Activated T-helper 1 cell treated with anti-CD3 and anti-CD28 coated beads, Interleukin-12 subunit alpha, Interleukin-12 subunit beta, Interleukin-2, Interleukin-4 antibody, amounts not matched to agents 30 ng/mL and 10 ng/mL and 1 ng/mL, durations not matched to agents 14 hours and 24 hours and 36 hours (primary cell): ENCODE measurements at regions of chr19 and their contacts with region 1.

Region 1: GRCh38 chr19:37466798-37467607 is at the start of gene ZNF569:
- DNase-seq: peak; percentile 85
- H3K4me3 Mint-ChIP-seq: peak within 1 kb of the TSS; percentile 92
- H3K27ac Mint-ChIP-seq: peak within 1 kb of the TSS; percentile 93
- H3K4me1 Mint-ChIP-seq: peaks cover 27% of the 10 kb centered on the region
- H3K27me3 Mint-ChIP-seq: no peaks in the 10 kb centered on the region
- total RNA-seq, gene ZNF569: 2.7 and 3.7 TPM in 2 replicates

Region 2: GRCh38 chr19:36573020-36573885 is 893.8 kb before region 1 on chr19 and contains the start of gene ZNF529:
- intact Hi-C with region 1: loop called (anchors 1 kb)
- DNase-seq: peak; percentile 85
- H3K4me3 Mint-ChIP-seq: peak within 1 kb of the TSS; percentile 89
- H3K27ac Mint-ChIP-seq: peak within 1 kb of the TSS; percentile 98
- H3K4me1 Mint-ChIP-seq: peaks cover 31% of the 10 kb centered on the region
- H3K27me3 Mint-ChIP-seq: no peaks in the 10 kb centered on the region
- total RNA-seq, gene ZNF529: 20.3 and 20.7 TPM in 2 replicates

Region 3: GRCh38 chr19:36973021-36973843 is 493.8 kb before region 1 on chr19:
- intact Hi-C with region 1: loop called (anchors 5 kb)
- DNase-seq: peak; percentile 67
- H3K4me3 Mint-ChIP-seq: peak overlapping the region; percentile 98
- H3K27ac Mint-ChIP-seq: peak overlapping the region; percentile 87
- H3K4me1 Mint-ChIP-seq: peaks cover 12% of the 10 kb centered on the region
- H3K27me3 Mint-ChIP-seq: no peaks in the 10 kb centered on the region

Region 4: DNA sequence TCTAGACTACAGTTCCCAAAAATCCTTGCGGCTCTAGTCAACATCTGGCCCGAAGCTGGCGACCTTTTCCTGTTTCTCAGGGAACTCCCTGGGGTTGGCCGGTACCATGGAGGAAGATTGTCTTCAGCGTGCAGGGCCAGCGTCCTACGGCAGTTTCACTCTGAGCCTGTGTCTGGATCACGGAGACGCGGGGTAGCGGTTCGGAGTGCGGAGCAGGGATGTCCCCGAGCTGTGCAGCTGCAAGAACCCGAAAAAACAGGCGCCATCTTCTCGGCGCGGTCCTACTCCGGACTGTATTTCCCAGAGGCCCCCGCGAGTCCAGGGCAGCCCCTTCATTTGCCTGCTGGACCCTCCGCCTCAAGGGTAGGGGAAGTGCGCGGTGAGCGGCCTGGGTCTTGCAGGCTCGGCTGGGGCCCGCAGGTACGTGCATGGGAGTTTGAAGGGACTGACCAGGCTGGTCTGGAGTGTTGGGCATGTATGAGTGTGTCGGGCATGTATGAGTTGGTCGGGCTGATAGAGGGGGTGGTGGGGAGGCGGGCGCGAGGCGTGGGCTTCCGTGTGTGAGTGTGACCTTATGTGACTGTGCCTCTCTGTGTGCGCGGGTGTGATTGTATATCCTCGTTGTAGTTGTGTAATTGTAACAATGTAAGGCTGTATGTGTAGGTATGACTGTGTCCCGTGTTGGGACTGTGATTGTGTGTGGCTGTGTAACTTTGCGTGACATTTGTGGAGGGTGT is 249.0 kb before region 1 on chr19 and contains the start of gene ZNF383:
- intact Hi-C with region 1: loop called (anchors 1 kb)
- DNase-seq: peak; percentile 78
- H3K4me3 Mint-ChIP-seq: peak within 1 kb of the TSS; percentile 96
- H3K27ac Mint-ChIP-seq: peak within 1 kb of the TSS; percentile 90
- H3K4me1 Mint-ChIP-seq: peaks cover 20% of the 10 kb centered on the region
- H3K27me3 Mint-ChIP-seq: no peaks in the 10 kb centered on the region
- total RNA-seq, gene ZNF383: 6.3 TPM in 2 replicates

Region 5: DNA sequence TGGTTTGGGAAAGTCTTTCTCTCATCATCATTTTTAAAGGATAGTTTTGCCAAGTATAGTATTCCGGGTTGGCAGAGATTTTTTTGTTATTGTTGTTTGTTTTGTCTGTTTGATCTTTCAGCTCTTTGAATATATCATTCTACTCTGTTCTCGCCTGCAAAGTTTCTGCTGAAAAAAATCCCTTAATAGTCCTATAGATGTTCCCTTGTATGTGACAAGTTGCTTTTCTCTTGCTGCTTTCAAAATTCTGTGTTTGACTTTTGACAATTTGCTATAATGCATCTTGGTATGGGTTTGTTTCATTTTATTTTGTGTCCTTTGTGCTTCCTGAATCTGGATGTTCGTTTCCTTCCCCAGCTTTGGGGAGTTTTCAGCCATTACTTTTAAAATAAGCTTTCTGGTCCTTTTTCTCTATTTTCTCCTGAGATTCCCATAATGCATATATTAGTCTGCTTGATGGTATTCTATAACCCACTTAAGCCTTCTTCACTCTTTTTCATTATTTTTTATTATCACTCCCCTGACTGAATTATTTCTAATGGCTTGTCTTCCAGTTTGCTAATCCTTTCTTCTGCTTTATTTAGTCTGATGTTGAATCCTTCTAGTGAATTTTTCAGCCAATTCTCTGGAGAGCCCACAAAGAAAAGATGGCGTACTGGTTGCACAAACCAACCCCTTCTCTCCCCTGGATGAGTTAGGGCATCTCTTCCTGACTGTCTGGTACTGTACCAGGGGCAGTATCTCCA is 14.3 kb before region 1 on chr19:
- intact Hi-C with region 1: no loop called
- DNase-seq: no peak
- H3K4me3 Mint-ChIP-seq: no peak overlapping the region
- H3K27ac Mint-ChIP-seq: no peak overlapping the region
- H3K4me1 Mint-ChIP-seq: no peaks in the 10 kb centered on the region
- H3K27me3 Mint-ChIP-seq: no peaks in the 10 kb centered on the region

Region 6: DNA sequence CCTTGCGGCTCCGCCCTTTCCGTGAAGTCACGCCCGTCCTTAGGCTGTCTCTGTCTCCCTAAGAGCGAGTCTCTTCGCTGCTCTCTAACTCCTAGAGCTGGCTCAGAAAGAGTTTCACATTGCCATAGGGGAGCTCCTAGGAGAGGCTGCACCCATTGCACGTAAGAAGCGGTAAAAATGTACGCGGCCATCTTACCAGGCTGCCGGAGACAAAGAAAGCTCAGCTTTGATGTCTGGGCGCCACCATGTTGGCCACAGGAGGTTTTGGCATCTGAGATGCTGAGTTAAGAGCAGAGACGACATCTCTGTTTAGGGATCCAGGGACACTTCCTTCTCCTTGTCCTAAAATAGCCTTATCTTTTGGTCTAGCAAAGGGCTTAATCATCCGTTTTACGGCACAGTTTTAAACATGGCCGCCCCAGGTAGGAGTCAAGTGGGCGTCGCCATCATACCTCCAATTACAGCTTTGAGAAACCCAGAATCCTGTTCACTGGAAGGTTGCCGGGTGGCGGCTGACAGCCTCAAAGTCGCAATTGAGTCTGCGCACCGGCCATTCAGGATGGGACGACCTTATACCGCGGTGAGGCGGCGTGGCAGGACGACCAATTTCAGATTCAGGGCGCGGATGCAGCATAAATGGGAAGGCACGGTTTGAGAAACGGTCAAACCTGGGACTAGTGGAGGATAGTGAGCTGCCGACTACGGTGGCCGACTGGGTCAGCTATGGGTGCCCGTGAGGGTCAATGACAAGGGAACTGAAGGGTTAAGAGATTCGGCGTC is 39.6 kb after region 1 on chr19 and contains the start of gene ZNF793:
- intact Hi-C with region 1: loop called (anchors 5 kb)
- DNase-seq: peak; percentile 21
- H3K4me3 Mint-ChIP-seq: no peak within 1 kb of the TSS
- H3K27ac Mint-ChIP-seq: no peak within 1 kb of the TSS
- H3K4me1 Mint-ChIP-seq: no peaks in the 10 kb centered on the region
- H3K27me3 Mint-ChIP-seq: no peaks in the 10 kb centered on the region
- total RNA-seq, gene ZNF793: 0.39 and 0.44 TPM in 2 replicates

Region 7: DNA sequence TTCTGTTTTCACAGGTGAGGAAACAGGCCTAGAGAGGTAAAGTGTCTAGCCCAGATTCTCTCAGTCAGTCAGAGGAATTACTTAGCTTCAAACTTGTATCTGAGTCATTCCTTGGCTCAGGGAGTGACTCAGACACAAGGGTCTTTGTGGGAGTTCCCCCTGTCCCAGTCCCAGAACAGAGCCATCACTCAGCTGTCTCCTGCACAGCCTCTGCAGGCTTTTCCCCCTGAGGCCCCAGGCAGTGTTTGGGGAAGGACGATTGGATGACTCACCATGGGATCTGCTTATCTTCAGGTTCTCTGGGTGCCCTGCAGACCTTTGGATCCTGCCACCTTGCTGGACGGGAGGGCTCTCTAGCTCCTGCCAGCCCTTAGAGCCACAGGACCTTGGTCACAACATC is 52.9 kb after region 1 on chr19:
- intact Hi-C with region 1: no loop called
- DNase-seq: no peak
- H3K4me3 Mint-ChIP-seq: no peak overlapping the region
- H3K27ac Mint-ChIP-seq: no peak overlapping the region
- H3K4me1 Mint-ChIP-seq: no peaks in the 10 kb centered on the region
- H3K27me3 Mint-ChIP-seq: no peaks in the 10 kb centered on the region

Region 8: GRCh38 chr19:37655689-37656371 is 188.8 kb after region 1 on chr19:
- intact Hi-C with region 1: loop called (anchors 1 kb)
- DNase-seq: peak; percentile 83
- H3K4me3 Mint-ChIP-seq: peak overlapping the region; percentile 90
- H3K27ac Mint-ChIP-seq: peak overlapping the region; percentile 93
- H3K4me1 Mint-ChIP-seq: peaks cover 28% of the 10 kb centered on the region
- H3K27me3 Mint-ChIP-seq: no peaks in the 10 kb centered on the region

Region 9: DNA sequence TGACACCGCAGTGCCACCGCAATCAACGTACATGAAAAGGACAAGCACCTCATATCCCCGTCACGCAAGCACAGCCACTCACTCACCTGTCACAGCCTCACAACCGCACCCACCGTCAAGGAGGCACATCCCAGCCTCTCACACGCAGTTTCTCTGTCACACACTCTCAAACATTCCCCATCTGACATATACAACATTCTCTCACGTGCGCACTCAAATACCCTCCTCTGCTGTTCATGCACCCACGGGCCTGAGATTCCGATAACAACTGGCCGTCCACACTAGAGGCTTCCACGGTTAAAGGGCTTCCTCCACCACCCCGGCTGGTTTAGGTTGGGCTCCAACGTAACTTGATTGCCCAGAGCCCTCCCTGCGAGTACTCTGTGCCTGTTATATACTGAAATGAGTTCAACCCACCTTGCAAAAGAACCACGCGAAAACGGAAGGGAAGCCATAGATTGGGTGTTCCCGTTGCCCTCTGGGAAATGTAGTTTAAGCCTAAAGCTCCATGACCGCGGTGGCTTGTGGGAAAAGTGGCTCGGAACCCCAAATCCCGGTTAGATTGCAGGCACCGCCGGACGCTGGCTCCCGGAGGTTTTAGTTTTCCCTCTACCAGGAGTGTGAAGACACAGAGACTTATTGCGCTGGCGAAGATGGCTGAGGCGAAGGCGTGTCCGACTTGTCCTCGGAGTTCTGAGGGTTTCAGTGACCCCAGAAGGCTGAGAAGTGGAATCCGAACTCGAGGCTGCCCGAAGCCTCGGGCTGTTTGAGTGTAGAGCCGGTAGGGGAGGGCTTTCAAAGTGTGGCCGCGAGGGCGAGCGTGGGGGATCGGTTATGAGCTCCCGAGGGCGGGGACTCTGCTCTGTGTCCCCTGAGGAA is 312.4 kb after region 1 on chr19 and contains the start of gene ZNF573:
- intact Hi-C with region 1: loop called (anchors 1 kb)
- DNase-seq: peak; percentile 73
- H3K4me3 Mint-ChIP-seq: peak within 1 kb of the TSS; percentile 95
- H3K27ac Mint-ChIP-seq: peak within 1 kb of the TSS; percentile 86
- H3K4me1 Mint-ChIP-seq: peaks cover 15% of the 10 kb centered on the region
- H3K27me3 Mint-ChIP-seq: no peaks in the 10 kb centered on the region
- total RNA-seq, gene ZNF573: 3.7 and 5.6 TPM in 2 replicates